ENCODE measurements at regions of chrX and their contacts with region 1.

Region 1: GRCh38 chrX:74133156-74133796 is 170.7 kb upstream of the ZCCHC13 start:
- DNase-seq: no peak

Region 2: DNA sequence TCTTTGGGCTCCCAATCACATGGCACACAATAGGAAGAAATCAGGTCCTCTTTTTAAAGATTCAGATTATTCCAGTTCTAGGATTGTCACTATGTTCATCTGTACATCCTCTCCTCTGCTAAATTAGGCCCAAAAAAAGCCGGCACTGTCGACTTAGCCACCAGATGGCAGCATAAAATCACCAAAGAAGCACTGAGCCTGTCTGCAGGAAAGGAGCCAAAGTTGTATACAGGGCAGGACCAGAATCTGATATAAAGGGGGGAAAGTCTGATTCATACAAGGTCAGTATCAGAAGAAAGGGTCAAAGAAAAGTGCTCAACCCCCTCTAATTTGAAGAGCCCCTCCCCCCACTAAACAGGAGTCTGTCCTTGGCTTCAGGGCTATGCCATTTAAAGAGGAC is 277.7 kb before region 1 on chrX:
- intact Hi-C with region 1: loop called (anchors 2 kb)
- DNase-seq: no peak

Region 3: GRCh38 chrX:74015379-74016019 is 117.8 kb before region 1 on chrX:
- intact Hi-C with region 1: loop called (anchors 5 kb)
- DNase-seq: no peak